Naive thymus-derived CD4-positive, alpha-beta T cell (primary cell): ENCODE measurements at regions of chr11 and their contacts with region 1.

Region 1: GRCh38 chr11:13928566-13929251 is 33.8 kb upstream of the SPON1 start:
- DNase-seq: no peak
- ATAC-seq: no peak
- H3K4me3 ChIP-seq: no peak overlapping the region
- H3K4me3 Mint-ChIP-seq: no peak overlapping the region
- H3K27ac ChIP-seq: no peak overlapping the region
- H3K27ac Mint-ChIP-seq: peak overlapping the region in 3 of 9 donors; percentile 0 to 49 (median 25)
- H3K4me1 ChIP-seq: peaks cover 21 to 25% of the 10 kb centered on the region in 2 donors
- H3K4me1 Mint-ChIP-seq: peaks cover 24 to 45% (median 39%) of the 10 kb centered on the region in 7 donors
- H3K27me3 ChIP-seq: no peaks in the 10 kb centered on the region
- H3K27me3 Mint-ChIP-seq: no peaks in the 10 kb centered on the region

Region 2: GRCh38 chr11:13861411-13861810 is 67.3 kb before region 1 on chr11:
- CTCF ChIA-PET with region 1: interaction called, 5 read pairs
- POLR2A ChIA-PET with region 1: interaction called, 6 read pairs
- intact Hi-C with region 1: loop called in 1 of 2 experiments (anchors 2 kb)
- DNase-seq: peak in 4 of 9 donors; percentile 11 to 19 (median 14)
- ATAC-seq: no peak
- H3K4me3 ChIP-seq: no peak overlapping the region
- H3K4me3 Mint-ChIP-seq: peak overlapping the region in 7 of 10 donors; percentile 6 to 66 (median 55)
- H3K27ac ChIP-seq: no peak overlapping the region
- H3K27ac Mint-ChIP-seq: peak overlapping the region in 8 of 9 donors; percentile 33 to 98 (median 71)
- H3K4me1 ChIP-seq: peaks cover 6 to 19% of the 10 kb centered on the region in 2 donors
- H3K4me1 Mint-ChIP-seq: peaks cover 20 to 33% (median 25%) of the 10 kb centered on the region in 7 donors
- H3K27me3 ChIP-seq: no peaks in the 10 kb centered on the region
- H3K27me3 Mint-ChIP-seq: no peaks in the 10 kb centered on the region

Region 3: GRCh38 chr11:13868710-13869397 is 59.9 kb before region 1 on chr11:
- CTCF ChIA-PET with region 1: interaction called, 3 read pairs
- POLR2A ChIA-PET with region 1: interaction called, 31 read pairs
- intact Hi-C with region 1: loop called (anchors 1 kb)
- DNase-seq: peak in 7 of 9 donors; percentile 73 to 92 (median 88)
- ATAC-seq: peak; percentile 96
- H3K4me3 ChIP-seq: no peak overlapping the region
- H3K4me3 Mint-ChIP-seq: peak overlapping the region in 9 of 10 donors; percentile 2 to 70 (median 40)
- H3K27ac ChIP-seq: peak overlapping the region; percentile 87
- H3K27ac Mint-ChIP-seq: peak overlapping the region; percentile 86 to 97 (median 92)
- H3K4me1 ChIP-seq: peaks cover 9 to 19% of the 10 kb centered on the region in 2 donors
- H3K4me1 Mint-ChIP-seq: peaks cover 19 to 56% (median 43%) of the 10 kb centered on the region in 7 donors
- H3K27me3 ChIP-seq: no peaks in the 10 kb centered on the region
- H3K27me3 Mint-ChIP-seq: peaks cover 0 to 14% (median 0%) of the 10 kb centered on the region in 5 donors

Region 4: DNA sequence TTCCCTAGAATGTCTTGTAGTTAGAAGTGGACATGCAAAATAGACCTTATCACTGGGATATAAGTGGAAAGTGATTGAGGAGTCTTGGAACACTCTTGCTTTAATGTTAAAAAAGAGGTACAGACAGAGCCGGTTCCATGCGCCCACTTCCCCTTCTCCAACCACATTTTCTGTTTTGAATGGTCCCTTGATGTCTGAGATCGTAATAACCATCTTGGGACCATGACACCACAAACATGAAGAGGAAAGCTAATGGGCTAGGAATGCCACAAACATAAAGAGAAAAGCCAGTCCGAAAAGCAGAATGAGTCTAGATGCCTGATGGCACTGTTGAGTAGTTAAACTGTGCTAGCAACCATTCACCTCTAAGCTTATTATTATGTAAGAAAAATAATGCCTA is 21.0 kb before region 1 on chr11:
- CTCF ChIA-PET with region 1: no interaction called
- POLR2A ChIA-PET with region 1: interaction called, 7 read pairs
- intact Hi-C with region 1: loop called in 1 of 2 experiments (anchors 1 kb)
- DNase-seq: no peak
- ATAC-seq: no peak
- H3K4me3 ChIP-seq: no peak overlapping the region
- H3K4me3 Mint-ChIP-seq: no peak overlapping the region
- H3K27ac ChIP-seq: no peak overlapping the region
- H3K27ac Mint-ChIP-seq: no peak overlapping the region
- H3K4me1 ChIP-seq: no peaks in the 10 kb centered on the region
- H3K4me1 Mint-ChIP-seq: no peaks in the 10 kb centered on the region
- H3K27me3 ChIP-seq: peaks cover 0 to 4% of the 10 kb centered on the region in 2 donors
- H3K27me3 Mint-ChIP-seq: peaks cover 0 to 30% (median 0%) of the 10 kb centered on the region in 5 donors

Region 5: GRCh38 chr11:13917264-13917663 is 11.4 kb before region 1 on chr11:
- CTCF ChIA-PET with region 1: no interaction called
- POLR2A ChIA-PET with region 1: interaction called, 7 read pairs
- intact Hi-C with region 1: loop called in 1 of 2 experiments (anchors 1 kb)
- DNase-seq: no peak
- ATAC-seq: no peak
- H3K4me3 ChIP-seq: no peak overlapping the region
- H3K4me3 Mint-ChIP-seq: no peak overlapping the region
- H3K27ac ChIP-seq: no peak overlapping the region
- H3K27ac Mint-ChIP-seq: no peak overlapping the region
- H3K4me1 ChIP-seq: peaks cover 9 to 10% of the 10 kb centered on the region in 2 donors
- H3K4me1 Mint-ChIP-seq: peaks cover 10 to 30% (median 22%) of the 10 kb centered on the region in 7 donors
- H3K27me3 ChIP-seq: no peaks in the 10 kb centered on the region
- H3K27me3 Mint-ChIP-seq: peaks cover 0 to 33% (median 0%) of the 10 kb centered on the region in 5 donors

Region 6: GRCh38 chr11:13942983-13943382 is 14.3 kb after region 1 on chr11:
- CTCF ChIA-PET with region 1: interaction called, 13 read pairs
- POLR2A ChIA-PET with region 1: interaction called, 62 read pairs
- intact Hi-C with region 1: loop called (anchors 1 to 2 kb)
- DNase-seq: no peak
- ATAC-seq: no peak
- H3K4me3 ChIP-seq: no peak overlapping the region
- H3K4me3 Mint-ChIP-seq: peak overlapping the region in 1 of 10 donors; percentile 36
- H3K27ac ChIP-seq: no peak overlapping the region
- H3K27ac Mint-ChIP-seq: peak overlapping the region in 4 of 9 donors; percentile 0 to 54 (median 8)
- H3K4me1 ChIP-seq: peaks cover 28 to 50% of the 10 kb centered on the region in 2 donors
- H3K4me1 Mint-ChIP-seq: peaks cover 20 to 67% (median 54%) of the 10 kb centered on the region in 7 donors
- H3K27me3 ChIP-seq: no peaks in the 10 kb centered on the region
- H3K27me3 Mint-ChIP-seq: peaks cover 0 to 18% (median 0%) of the 10 kb centered on the region in 5 donors

Region 7: GRCh38 chr11:13962562-13963168 is 34.0 kb after region 1 on chr11 and contains the start of gene SPON1:
- CTCF ChIA-PET with region 1: interaction called, 4 read pairs
- POLR2A ChIA-PET with region 1: interaction called, 9 read pairs
- intact Hi-C with region 1: loop called in 1 of 2 experiments (anchors 1 kb)
- DNase-seq: peak in 7 of 9 donors; percentile 34 to 57 (median 42)
- ATAC-seq: peak; percentile 81
- H3K4me3 ChIP-seq: peak within 1 kb of the TSS; percentile 34
- H3K4me3 Mint-ChIP-seq: peak within 1 kb of the TSS; percentile 68 to 86 (median 77)
- H3K27ac ChIP-seq: no peak within 1 kb of the TSS
- H3K27ac Mint-ChIP-seq: peak within 1 kb of the TSS in 1 of 9 donors; percentile 55
- H3K4me1 ChIP-seq: peaks cover 10 to 16% of the 10 kb centered on the region in 2 donors
- H3K4me1 Mint-ChIP-seq: peaks cover 4 to 18% (median 13%) of the 10 kb centered on the region in 7 donors
- H3K27me3 ChIP-seq: peaks cover 6 to 21% of the 10 kb centered on the region in 2 donors
- H3K27me3 Mint-ChIP-seq: peaks cover 55 to 88% (median 62%) of the 10 kb centered on the region in 5 donors
- total RNA-seq, gene SPON1: 1.6 to 20.8 (median 3.9) TPM